Mucosa of descending colon (tissue), 3 donors: ENCODE measurements at regions of chr1 and their contacts with region 1.

Region 1: DNA sequence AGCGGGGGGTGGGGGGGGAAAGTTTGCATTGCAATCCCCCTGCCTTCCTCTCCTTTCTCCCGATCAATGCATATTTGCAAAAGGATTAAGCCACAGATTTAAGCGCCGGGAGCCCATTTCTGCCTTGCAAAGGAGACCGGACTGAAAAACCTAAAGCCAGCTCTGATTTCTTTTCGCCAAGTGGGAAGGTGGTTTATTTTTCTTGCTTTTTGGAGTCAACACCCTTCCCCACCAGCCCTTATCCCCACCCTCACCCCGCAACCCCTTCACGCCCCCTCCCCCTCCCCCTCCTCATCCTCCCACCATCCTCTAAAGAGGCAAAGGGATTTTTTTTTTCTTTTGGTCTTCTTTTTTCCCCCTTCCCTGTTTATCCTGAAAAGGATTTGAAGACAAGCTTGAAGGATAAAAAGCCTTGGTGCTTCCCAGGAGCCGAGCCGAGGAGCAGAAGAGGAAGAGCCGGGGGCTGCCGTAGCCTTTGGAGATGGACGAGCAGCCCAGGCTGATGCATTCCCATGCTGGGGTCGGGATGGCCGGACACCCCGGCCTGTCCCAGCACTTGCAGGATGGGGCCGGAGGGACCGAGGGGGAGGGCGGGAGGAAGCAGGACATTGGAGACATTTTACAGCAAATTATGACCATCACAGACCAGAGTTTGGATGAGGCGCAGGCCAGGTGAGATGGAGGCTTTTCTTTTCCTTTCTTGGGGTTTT is 513 bp downstream of the PBX1 start:
- DNase-seq: peak; percentile 39 to 60 (median 57)
- ATAC-seq: peak; percentile 2
- H3K4me3 ChIP-seq: peak overlapping the region; percentile 40
- H3K4me1 ChIP-seq: no peaks in the 10 kb centered on the region
- CTCF ChIP-seq: no peak

Region 2: DNA sequence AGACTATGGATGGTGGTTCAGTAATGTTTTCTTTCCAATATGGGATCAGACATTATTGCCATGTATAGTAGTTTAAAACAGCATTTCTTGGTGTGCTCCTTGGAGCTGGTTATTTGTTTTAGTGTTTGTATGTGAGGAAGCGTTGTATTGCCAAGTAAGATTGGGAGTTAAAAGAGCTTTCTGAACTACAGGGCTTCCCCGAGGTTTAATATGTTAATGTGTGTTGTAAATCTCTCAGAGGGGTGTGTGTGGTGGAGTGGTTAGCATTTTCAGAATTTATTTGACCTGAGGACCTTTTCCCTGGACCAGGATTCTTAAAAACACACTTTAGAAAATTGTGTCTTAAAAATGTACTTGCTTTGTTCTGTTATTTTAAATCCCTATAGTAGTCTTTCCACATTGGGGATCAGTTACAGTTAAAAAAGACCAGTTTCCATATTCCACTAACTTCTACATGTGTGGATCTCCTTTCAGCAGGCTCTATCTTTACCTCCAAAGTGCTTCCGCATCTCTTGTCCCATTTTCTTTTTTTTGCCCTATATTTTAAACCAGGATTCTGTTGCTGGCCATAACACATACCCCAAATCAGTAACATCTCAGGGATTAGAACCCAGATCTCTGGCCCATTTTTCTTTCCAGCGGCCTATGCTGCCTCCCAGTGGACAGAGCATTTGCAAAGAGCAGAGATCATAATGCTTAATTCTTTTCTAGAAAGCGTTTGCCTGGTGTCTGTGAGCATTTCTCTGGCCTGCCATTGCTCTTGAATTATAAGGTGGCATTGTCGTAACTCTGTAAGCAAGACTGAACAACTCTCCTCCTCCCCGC is 58.1 kb after region 1 on chr1:
- intact Hi-C with region 1: loop called in 1 of 2 experiments (anchors 10 kb)
- DNase-seq: peak in 2 of 3 donors; percentile 57 to 72
- ATAC-seq: peak; percentile 33
- H3K4me3 ChIP-seq: no peak overlapping the region
- H3K4me1 ChIP-seq: peaks cover 23% of the 10 kb centered on the region
- CTCF ChIP-seq: peak; percentile 30

Region 3: GRCh38 chr1:164660412-164660772 is 100.9 kb after region 1 on chr1:
- intact Hi-C with region 1: no loop called
- DNase-seq: peak in 1 of 3 donors; percentile 38
- ATAC-seq: peak; percentile 77
- H3K4me3 ChIP-seq: no peak overlapping the region
- H3K4me1 ChIP-seq: peaks cover 29% of the 10 kb centered on the region
- CTCF ChIP-seq: no peak

Region 4: DNA sequence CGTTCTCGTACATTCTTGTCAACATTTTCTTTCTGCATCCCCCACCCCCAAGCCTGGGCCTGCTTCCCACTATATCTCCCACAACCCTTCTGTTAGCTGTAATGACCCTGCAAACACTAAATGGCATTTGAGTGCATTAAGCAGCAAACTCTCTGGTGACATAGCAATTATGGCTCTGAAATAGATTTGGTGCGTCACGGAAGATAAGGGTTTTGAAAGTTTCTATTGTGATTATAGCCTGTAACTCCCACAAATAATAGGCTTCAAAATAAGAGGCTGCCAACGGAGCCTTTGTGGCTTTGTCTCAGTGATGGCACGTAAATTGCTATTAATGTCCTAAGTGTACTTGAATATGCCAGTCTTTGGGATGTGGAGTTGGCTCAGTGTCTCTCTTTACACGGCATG is 277.1 kb after region 1 on chr1:
- intact Hi-C with region 1: no loop called
- DNase-seq: no peak
- ATAC-seq: no peak
- H3K4me3 ChIP-seq: no peak overlapping the region
- H3K4me1 ChIP-seq: no peaks in the 10 kb centered on the region
- CTCF ChIP-seq: no peak

Region 5: DNA sequence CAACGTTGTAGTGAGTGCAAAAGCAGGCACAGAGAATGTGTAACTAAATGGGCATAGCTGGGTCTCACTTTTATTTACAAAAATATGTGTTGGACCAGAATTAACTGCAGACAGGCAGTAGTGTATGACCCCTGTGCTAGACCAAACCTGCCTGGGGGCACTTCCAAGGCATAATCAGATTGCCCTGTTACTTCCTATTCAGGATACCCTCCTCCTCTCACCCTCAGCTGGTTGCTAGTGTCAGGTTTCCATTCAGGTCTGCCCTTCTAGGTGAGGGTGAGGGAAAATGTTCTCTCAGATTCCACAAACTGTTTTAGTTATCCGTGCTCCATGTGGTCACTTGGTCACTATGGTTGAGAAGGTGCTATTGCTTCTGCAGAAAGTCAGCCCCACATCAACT is 409.8 kb after region 1 on chr1:
- intact Hi-C with region 1: no loop called
- DNase-seq: no peak
- ATAC-seq: no peak
- H3K4me3 ChIP-seq: no peak overlapping the region
- H3K4me1 ChIP-seq: no peaks in the 10 kb centered on the region
- CTCF ChIP-seq: no peak